HCT116 (cell line): ENCODE measurements at regions of chr1 and their contacts with region 1.

Region 1: GRCh38 chr1:204431310-204432165 is 19.9 kb upstream of the PPP1R15B start:
- DNase-seq: no peak
- ATAC-seq: peak; percentile 97
- H3K4me3 ChIP-seq: no peak overlapping the region
- H3K27ac ChIP-seq: no peak overlapping the region
- H3K4me1 ChIP-seq: peaks cover 0 to 2% of the 10 kb centered on the region in 2 experiments; a peak in 2 of 4 replicates
- H3K27me3 ChIP-seq: no peaks in the 10 kb centered on the region
- CTCF ChIP-seq: peak; percentile 69 to 97 (median 95)
- POLR2A ChIP-seq: no peak
- RAD21 ChIP-seq: peak; percentile 65

Region 2: GRCh38 chr1:204417231-204417997 is 14.1 kb before region 1 on chr1:
- CTCF ChIA-PET with region 1: interaction called, 14 read pairs
- POLR2A ChIA-PET with region 1: no interaction called
- RAD21 ChIA-PET with region 1: no interaction called
- intact Hi-C with region 1: no loop called
- DNase-seq: peak; percentile 83
- ATAC-seq: peak; percentile 86
- H3K4me3 ChIP-seq: peak overlapping the region; percentile 29 to 48
- H3K27ac ChIP-seq: peak overlapping the region; percentile 89
- H3K4me1 ChIP-seq: peaks cover 28 to 61% of the 10 kb centered on the region in 2 experiments
- H3K27me3 ChIP-seq: no peaks in the 10 kb centered on the region
- CTCF ChIP-seq: no peak
- POLR2A ChIP-seq: peak; percentile 32
- RAD21 ChIP-seq: no peak

Region 3: GRCh38 chr1:204446370-204447111 is 15.0 kb after region 1 on chr1:
- CTCF ChIA-PET with region 1: interaction called, 17 read pairs
- POLR2A ChIA-PET with region 1: interaction called, 3 read pairs
- RAD21 ChIA-PET with region 1: no interaction called
- intact Hi-C with region 1: no loop called
- DNase-seq: no peak
- ATAC-seq: peak; percentile 87
- H3K4me3 ChIP-seq: no peak overlapping the region
- H3K27ac ChIP-seq: no peak overlapping the region
- H3K4me1 ChIP-seq: peaks cover 17 to 45% of the 10 kb centered on the region in 2 experiments
- H3K27me3 ChIP-seq: no peaks in the 10 kb centered on the region
- CTCF ChIP-seq: peak; percentile 70 to 87 (median 76)
- POLR2A ChIP-seq: no peak
- RAD21 ChIP-seq: peak; percentile 88

Region 4: DNA sequence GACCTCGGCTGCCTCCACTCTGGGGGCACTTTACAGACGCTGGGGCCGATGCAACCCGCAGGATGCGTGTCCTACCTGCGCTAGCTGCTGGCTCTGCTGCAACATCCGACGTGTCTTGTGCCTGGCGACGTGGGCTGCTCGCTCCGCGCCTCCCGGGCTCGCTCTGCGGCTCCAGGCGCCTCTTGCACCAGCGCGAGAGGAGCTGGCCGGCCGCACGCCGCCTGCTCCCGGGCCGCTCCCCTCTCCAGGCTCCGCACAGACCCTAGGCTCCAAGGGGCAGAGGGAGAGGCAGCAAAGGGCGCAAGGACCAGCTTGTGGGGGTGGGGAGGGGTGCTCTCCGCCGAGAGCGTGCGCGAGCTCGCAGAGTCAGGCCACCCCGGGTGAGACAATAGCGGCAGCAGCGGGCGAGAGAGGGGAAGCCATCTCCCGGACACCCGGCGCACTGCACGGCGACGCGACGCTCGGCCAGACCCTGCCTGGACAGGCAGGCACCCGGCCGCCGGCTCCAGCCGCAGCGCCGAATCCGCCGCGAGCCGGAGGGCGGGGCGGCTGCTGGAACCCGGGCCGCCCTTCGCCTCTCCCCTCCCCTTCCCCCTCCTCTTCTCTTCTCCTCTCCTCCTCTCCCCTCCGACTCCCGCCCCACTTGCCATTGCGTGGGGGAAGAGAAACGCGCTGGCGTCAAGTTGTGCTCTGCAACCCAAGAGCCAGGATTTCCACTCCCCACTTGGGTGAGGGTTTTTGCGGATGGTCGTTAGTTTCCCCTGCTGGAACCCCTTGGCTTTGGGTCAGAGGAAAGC is 62.9 kb after region 1 on chr1 and contains the start of gene PIK3C2B:
- CTCF ChIA-PET with region 1: interaction called, 18 read pairs
- POLR2A ChIA-PET with region 1: no interaction called
- RAD21 ChIA-PET with region 1: no interaction called
- intact Hi-C with region 1: no loop called
- DNase-seq: peak; percentile 52
- ATAC-seq: peak; percentile 87
- H3K4me3 ChIP-seq: peak within 1 kb of the TSS; percentile 80 to 94
- H3K27ac ChIP-seq: peak within 1 kb of the TSS; percentile 97
- H3K4me1 ChIP-seq: peaks cover 17 to 36% of the 10 kb centered on the region in 2 experiments
- H3K27me3 ChIP-seq: no peaks in the 10 kb centered on the region
- CTCF ChIP-seq: peak in 2 of 3 experiments; percentile 25 to 29; a peak in 3 of 6 replicates
- POLR2A ChIP-seq: peak; percentile 68
- RAD21 ChIP-seq: peak; percentile 36; the same call in 1 of the 2 replicates
- total RNA-seq, gene PIK3C2B: 17.4 TPM

Region 5: DNA sequence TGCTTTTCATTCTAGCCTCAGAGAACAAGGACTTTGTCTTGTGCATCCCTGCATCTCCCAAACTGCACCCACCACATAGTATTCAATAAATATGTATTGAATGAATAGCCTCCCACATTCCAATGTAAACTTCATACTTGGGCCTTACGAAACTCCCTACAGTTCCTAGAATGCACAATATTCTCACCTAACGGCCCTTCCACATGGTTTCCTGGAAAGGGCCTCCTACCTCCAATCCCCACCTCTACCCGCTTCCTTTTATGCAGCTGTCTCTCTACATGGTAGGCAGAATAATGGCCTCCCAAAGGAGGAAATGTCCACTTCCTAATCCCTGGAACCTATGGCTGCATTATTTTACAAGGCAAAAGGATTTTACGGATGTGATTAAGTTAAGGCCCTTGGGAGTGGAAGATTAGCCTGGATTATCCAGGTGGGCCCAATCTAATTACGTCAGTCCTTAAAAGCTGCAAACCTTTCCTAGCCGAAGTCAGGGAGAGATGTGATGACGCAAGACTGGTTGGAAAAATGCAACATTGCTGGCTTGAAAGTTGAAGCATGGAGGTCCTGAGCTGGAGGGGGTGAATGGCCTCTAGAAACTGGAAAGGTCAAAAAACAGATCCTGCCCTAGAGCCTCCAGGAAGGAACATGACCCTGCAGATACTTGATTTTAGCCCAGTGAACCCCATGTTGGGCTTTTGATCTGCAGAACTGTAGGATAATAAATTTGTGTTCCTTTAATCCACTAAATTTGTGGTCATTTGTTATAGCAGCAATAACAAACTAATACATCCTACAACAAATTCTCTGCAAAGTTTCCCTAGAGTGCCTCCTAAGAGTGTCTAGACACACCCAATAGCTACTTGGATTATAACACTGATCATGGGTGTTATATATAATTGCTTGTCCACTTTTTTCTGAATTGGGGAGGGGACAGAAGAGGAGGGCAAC is 68.3 kb after region 1 on chr1:
- CTCF ChIA-PET with region 1: interaction called, 37 read pairs
- POLR2A ChIA-PET with region 1: no interaction called
- RAD21 ChIA-PET with region 1: interaction called, 3 to 4 read pairs
- intact Hi-C with region 1: loop called (anchors 1 kb)
- DNase-seq: no peak
- ATAC-seq: no peak
- H3K4me3 ChIP-seq: no peak overlapping the region
- H3K27ac ChIP-seq: no peak overlapping the region
- H3K4me1 ChIP-seq: peaks cover 3 to 15% of the 10 kb centered on the region in 2 experiments; a peak in 3 of 4 replicates
- H3K27me3 ChIP-seq: no peaks in the 10 kb centered on the region
- CTCF ChIP-seq: no peak
- POLR2A ChIP-seq: no peak
- RAD21 ChIP-seq: no peak

Region 6: GRCh38 chr1:204506961-204507387 is 75.4 kb after region 1 on chr1:
- CTCF ChIA-PET with region 1: interaction called, 37 read pairs
- POLR2A ChIA-PET with region 1: no interaction called
- RAD21 ChIA-PET with region 1: interaction called, 3 to 4 read pairs
- intact Hi-C with region 1: loop called (anchors 1 kb)
- DNase-seq: peak; percentile 87
- ATAC-seq: peak; percentile 82
- H3K4me3 ChIP-seq: peak overlapping the region; percentile 7 to 38; a peak in 3 of 4 replicates
- H3K27ac ChIP-seq: peak overlapping the region; percentile 60
- H3K4me1 ChIP-seq: peaks cover 30 to 47% of the 10 kb centered on the region in 2 experiments
- H3K27me3 ChIP-seq: no peaks in the 10 kb centered on the region
- CTCF ChIP-seq: no peak
- POLR2A ChIP-seq: no peak
- RAD21 ChIP-seq: no peak